ENCODE measurements at regions of chr6 and their contacts with region 1.

Region 1: DNA sequence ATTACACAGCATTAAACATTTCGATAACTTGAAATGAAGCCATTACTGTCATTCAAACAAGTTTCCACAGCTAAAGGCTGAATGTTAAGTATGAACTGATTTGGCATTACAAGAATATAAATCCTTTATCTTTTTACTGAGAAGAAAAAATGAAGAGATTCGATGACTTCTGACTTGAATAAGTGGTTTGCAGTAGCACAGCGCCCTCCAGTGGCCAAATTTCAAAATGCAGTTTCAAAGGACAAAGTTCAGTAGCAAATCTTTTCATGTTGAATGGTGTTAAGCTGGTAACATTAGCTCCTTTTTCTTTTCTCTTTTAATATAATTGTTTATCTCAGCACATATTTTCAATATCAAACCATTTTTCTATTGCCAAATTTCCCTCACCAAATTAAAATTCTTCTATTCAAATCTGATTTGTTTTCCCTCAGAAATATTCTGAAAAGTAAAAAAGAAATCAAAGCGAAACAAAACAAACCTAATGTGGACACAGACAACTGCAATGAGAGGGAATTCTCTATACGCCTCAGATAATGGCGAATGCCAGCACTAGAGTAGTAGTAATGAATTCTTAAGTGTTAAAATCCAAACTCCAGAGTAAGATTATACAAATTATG is 145.7 kb downstream of the BTBD9 start:
- DNase-seq: peak; percentile 73 to 85 (median 82)
- ATAC-seq: no peak
- H3K4me3 ChIP-seq: no peak overlapping the region
- H3K27ac ChIP-seq: no peak overlapping the region
- H3K4me1 ChIP-seq: no peaks in the 10 kb centered on the region
- H3K27me3 ChIP-seq: no peaks in the 10 kb centered on the region
- CTCF ChIP-seq: peak; percentile 80 to 94 (median 89)
- POLR2A ChIP-seq: no peak

Region 2: GRCh38 chr6:37339741-37340638 is 1154.0 kb before region 1 on chr6:
- intact Hi-C with region 1: loop called (anchors 10 kb)
- DNase-seq: no peak
- ATAC-seq: no peak
- H3K4me3 ChIP-seq: no peak overlapping the region
- H3K27ac ChIP-seq: no peak overlapping the region
- H3K4me1 ChIP-seq: no peaks in the 10 kb centered on the region
- H3K27me3 ChIP-seq: no peaks in the 10 kb centered on the region
- CTCF ChIP-seq: no peak
- POLR2A ChIP-seq: no peak

Region 3: GRCh38 chr6:38443352-38444146 is 50.5 kb before region 1 on chr6:
- intact Hi-C with region 1: no loop called
- DNase-seq: peak in 1 of 4 donors; percentile 2
- ATAC-seq: no peak
- H3K4me3 ChIP-seq: no peak overlapping the region
- H3K27ac ChIP-seq: no peak overlapping the region
- H3K4me1 ChIP-seq: no peaks in the 10 kb centered on the region
- H3K27me3 ChIP-seq: no peaks in the 10 kb centered on the region
- CTCF ChIP-seq: no peak
- POLR2A ChIP-seq: no peak

Region 4: GRCh38 chr6:38552121-38552520 is 58.1 kb after region 1 on chr6:
- intact Hi-C with region 1: no loop called
- DNase-seq: peak in 1 of 4 donors; percentile 21
- ATAC-seq: no peak
- H3K4me3 ChIP-seq: no peak overlapping the region
- H3K27ac ChIP-seq: no peak overlapping the region
- H3K4me1 ChIP-seq: no peaks in the 10 kb centered on the region
- H3K27me3 ChIP-seq: no peaks in the 10 kb centered on the region
- CTCF ChIP-seq: no peak
- POLR2A ChIP-seq: no peak

Measured in body of pancreas (tissue), 4 donors.